Activated CD8-positive, alpha-beta T cell treated with anti-CD3 and anti-CD28 coated beads, Interleukin-2, amount 10 ng/mL, durations not matched to agents 7 days and 5 days (primary cell): ENCODE measurements at regions of chr3 and their contacts with region 1.

Region 1: DNA sequence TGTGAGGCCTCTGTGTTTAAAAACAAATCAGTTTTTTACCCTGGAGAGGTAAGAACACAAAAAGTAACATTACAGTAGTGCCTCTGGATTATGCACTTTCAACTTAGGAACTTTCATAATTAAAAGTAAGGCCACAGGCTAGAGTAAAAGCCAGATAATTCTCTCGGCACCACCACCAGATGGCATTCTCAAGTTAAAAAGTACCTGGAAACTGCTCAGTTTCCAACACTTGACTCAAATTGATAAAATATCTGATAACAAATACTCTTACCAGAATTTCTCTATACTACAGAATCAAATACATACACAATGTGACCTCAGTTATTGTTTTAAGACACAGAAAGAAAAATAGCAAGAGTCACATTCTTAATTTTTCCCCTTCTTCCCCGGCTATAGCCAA is 19.9 kb downstream of the SPICE1 start:
- DNase-seq: peak; percentile 58
- ATAC-seq: peak; percentile 67
- H3K4me3 Mint-ChIP-seq: no peak overlapping the region
- H3K27ac Mint-ChIP-seq: no peak overlapping the region
- H3K4me1 Mint-ChIP-seq: peaks cover 5% of the 10 kb centered on the region
- H3K27me3 Mint-ChIP-seq: no peaks in the 10 kb centered on the region

Region 2: GRCh38 chr3:113514265-113514769 is 19.3 kb after region 1 on chr3:
- CTCF ChIA-PET with region 1: interaction called, 46 read pairs
- POLR2A ChIA-PET with region 1: interaction called, 6 read pairs
- DNase-seq: no peak
- ATAC-seq: peak; percentile 5
- H3K4me3 Mint-ChIP-seq: no peak overlapping the region
- H3K27ac Mint-ChIP-seq: no peak overlapping the region
- H3K4me1 Mint-ChIP-seq: peaks cover 11% of the 10 kb centered on the region
- H3K27me3 Mint-ChIP-seq: peaks cover 16% of the 10 kb centered on the region

Region 3: GRCh38 chr3:113531826-113532697 is 37.0 kb after region 1 on chr3 and contains the start of gene SIDT1:
- CTCF ChIA-PET with region 1: interaction called, 10 read pairs
- POLR2A ChIA-PET with region 1: no interaction called
- DNase-seq: peak; percentile 86
- ATAC-seq: peak; percentile 83
- H3K4me3 Mint-ChIP-seq: peak within 1 kb of the TSS; percentile 92
- H3K27ac Mint-ChIP-seq: peak within 1 kb of the TSS; percentile 98
- H3K4me1 Mint-ChIP-seq: peaks cover 49% of the 10 kb centered on the region
- H3K27me3 Mint-ChIP-seq: peaks cover 3% of the 10 kb centered on the region
- total RNA-seq, gene SIDT1: 34.8 to 35.0 TPM

Region 4: GRCh38 chr3:113552851-113553250 is 57.8 kb after region 1 on chr3:
- CTCF ChIA-PET with region 1: interaction called, 29 read pairs
- POLR2A ChIA-PET with region 1: no interaction called
- DNase-seq: no peak
- ATAC-seq: no peak
- H3K4me3 Mint-ChIP-seq: no peak overlapping the region
- H3K27ac Mint-ChIP-seq: no peak overlapping the region
- H3K4me1 Mint-ChIP-seq: peaks cover 4% of the 10 kb centered on the region
- H3K27me3 Mint-ChIP-seq: no peaks in the 10 kb centered on the region

Region 5: GRCh38 chr3:113626503-113627371 is 131.7 kb after region 1 on chr3:
- CTCF ChIA-PET with region 1: interaction called, 14 read pairs
- POLR2A ChIA-PET with region 1: no interaction called
- DNase-seq: peak; percentile 26
- ATAC-seq: no peak
- H3K4me3 Mint-ChIP-seq: no peak overlapping the region
- H3K27ac Mint-ChIP-seq: peak overlapping the region; percentile 1
- H3K4me1 Mint-ChIP-seq: no peaks in the 10 kb centered on the region
- H3K27me3 Mint-ChIP-seq: no peaks in the 10 kb centered on the region